Activated CD8-positive, alpha-beta T cell treated with anti-CD3 and anti-CD28 coated beads, Interleukin-2, amount 10 ng/mL, durations not matched to agents 7 days and 5 days (primary cell): ENCODE measurements at regions of chr1 and their contacts with region 1.

Region 1: GRCh38 chr1:39183503-39184353 is 20.8 kb upstream of the MACF1 start:
- DNase-seq: peak; percentile 89
- ATAC-seq: peak; percentile 90
- H3K4me3 Mint-ChIP-seq: peak overlapping the region; percentile 1
- H3K27ac Mint-ChIP-seq: peak overlapping the region; percentile 84
- H3K4me1 Mint-ChIP-seq: peaks cover 45% of the 10 kb centered on the region
- H3K27me3 Mint-ChIP-seq: no peaks in the 10 kb centered on the region

Region 2: DNA sequence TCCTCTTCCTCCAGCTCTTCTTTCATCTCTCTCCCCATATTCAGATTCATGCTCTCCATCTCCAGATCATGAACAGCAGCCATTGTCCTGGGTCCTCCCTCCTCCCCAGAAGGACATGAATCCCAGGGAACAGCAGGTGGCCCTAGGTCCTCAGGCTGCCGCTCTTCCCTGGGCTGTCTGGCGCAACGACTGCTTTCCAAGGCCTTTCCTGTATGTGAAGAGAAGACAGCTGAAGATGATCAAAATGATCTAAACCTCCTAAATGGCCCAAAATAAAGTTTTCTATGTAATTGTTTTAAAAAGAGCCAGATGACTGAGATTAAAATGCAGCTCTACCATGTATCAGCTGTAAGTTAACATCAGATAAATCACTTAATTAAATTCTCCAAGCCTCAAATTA is 264.6 kb before region 1 on chr1:
- CTCF ChIA-PET with region 1: no interaction called
- POLR2A ChIA-PET with region 1: no interaction called
- DNase-seq: no peak
- ATAC-seq: no peak
- H3K4me3 Mint-ChIP-seq: no peak overlapping the region
- H3K27ac Mint-ChIP-seq: peak overlapping the region; percentile 12
- H3K4me1 Mint-ChIP-seq: peaks cover 13% of the 10 kb centered on the region
- H3K27me3 Mint-ChIP-seq: no peaks in the 10 kb centered on the region

Region 3: GRCh38 chr1:39047374-39048229 is 136.1 kb before region 1 on chr1:
- CTCF ChIA-PET with region 1: no interaction called
- POLR2A ChIA-PET with region 1: no interaction called
- DNase-seq: no peak
- ATAC-seq: no peak
- H3K4me3 Mint-ChIP-seq: no peak overlapping the region
- H3K27ac Mint-ChIP-seq: no peak overlapping the region
- H3K4me1 Mint-ChIP-seq: peaks cover 5% of the 10 kb centered on the region
- H3K27me3 Mint-ChIP-seq: no peaks in the 10 kb centered on the region

Region 4: GRCh38 chr1:39105061-39105840 is 78.5 kb before region 1 on chr1:
- CTCF ChIA-PET with region 1: interaction called, 283 read pairs
- POLR2A ChIA-PET with region 1: interaction called, 3 read pairs
- DNase-seq: peak; percentile 59
- ATAC-seq: peak; percentile 86
- H3K4me3 Mint-ChIP-seq: peak overlapping the region; percentile 78
- H3K27ac Mint-ChIP-seq: no peak overlapping the region
- H3K4me1 Mint-ChIP-seq: peaks cover 24% of the 10 kb centered on the region
- H3K27me3 Mint-ChIP-seq: peaks cover 7% of the 10 kb centered on the region

Region 5: GRCh38 chr1:39204441-39205081 is 20.8 kb after region 1 on chr1 and contains the start of gene MACF1:
- CTCF ChIA-PET with region 1: interaction called, 540 read pairs
- POLR2A ChIA-PET with region 1: interaction called, 12 read pairs
- DNase-seq: peak; percentile 58
- ATAC-seq: peak; percentile 61
- H3K4me3 Mint-ChIP-seq: peak within 1 kb of the TSS; percentile 93
- H3K27ac Mint-ChIP-seq: peak within 1 kb of the TSS; percentile 93
- H3K4me1 Mint-ChIP-seq: peaks cover 53% of the 10 kb centered on the region
- H3K27me3 Mint-ChIP-seq: no peaks in the 10 kb centered on the region
- total RNA-seq, gene MACF1: 353 to 366 TPM

Region 6: DNA sequence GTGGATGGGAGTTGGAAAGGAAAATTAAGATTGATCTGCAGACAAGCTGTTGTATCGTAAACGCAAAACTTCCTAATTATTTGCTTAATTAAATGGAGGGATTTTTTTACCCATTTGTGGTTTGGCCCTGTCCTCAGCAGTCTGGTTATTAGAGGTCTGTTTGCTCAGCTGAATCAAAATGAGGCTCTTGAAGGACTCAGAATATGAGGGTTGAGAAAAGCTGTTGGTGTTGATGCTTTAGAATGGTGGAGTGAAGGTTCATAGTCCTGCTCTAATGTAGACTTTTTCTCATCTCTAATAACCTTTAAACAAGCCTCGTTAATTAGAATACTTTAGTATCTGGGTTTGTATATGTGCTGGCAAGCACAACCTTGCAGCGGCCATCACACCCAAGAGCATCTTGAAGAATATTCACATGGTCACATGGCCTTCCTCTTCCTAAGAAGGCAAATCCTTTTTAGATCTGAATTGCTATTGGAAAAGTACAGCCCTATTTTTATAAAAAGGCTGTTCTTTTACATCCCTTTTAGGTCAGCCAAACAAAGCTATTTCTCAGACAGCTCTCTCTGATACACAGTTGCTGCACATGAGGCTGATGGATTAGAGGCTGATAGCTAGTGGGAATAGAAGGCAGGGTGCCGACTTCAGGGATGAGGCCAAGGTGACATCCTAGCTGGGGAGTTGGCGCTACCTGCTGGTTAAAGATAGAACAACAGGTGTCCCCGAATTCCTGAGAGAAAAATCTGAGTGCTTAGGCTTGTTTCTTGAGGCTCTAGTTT is 74.6 kb after region 1 on chr1:
- CTCF ChIA-PET with region 1: interaction called, 517 read pairs
- POLR2A ChIA-PET with region 1: interaction called, 3 read pairs
- DNase-seq: peak; percentile 69
- ATAC-seq: peak; percentile 57
- H3K4me3 Mint-ChIP-seq: no peak overlapping the region
- H3K27ac Mint-ChIP-seq: no peak overlapping the region
- H3K4me1 Mint-ChIP-seq: peaks cover 27% of the 10 kb centered on the region
- H3K27me3 Mint-ChIP-seq: no peaks in the 10 kb centered on the region

Region 7: DNA sequence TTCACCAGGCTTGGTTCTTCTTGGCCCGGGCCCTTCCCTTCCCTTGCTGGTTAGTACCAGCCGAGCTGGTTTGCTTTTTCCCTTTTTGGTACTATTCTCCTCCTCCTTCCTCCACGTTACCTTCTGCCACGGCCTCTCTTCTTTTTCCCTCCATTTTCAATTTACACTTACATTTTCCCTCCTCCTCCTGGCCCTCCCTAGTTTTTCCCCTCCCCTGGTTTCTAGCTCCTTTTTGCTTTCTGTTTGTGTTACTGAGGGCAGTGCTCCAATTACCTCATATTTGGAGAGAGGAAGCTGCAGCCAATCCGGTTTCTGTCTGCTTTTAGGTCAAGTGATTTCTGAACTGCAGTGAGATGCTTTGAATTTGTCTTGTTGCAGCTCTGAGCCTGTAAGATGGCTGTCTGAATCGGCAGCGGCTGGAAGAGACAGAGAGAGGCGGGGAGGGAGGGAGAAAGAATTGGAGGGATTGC is 84.4 kb after region 1 on chr1:
- CTCF ChIA-PET with region 1: interaction called, 517 read pairs
- POLR2A ChIA-PET with region 1: no interaction called
- DNase-seq: no peak
- ATAC-seq: no peak
- H3K4me3 Mint-ChIP-seq: peak overlapping the region; percentile 53
- H3K27ac Mint-ChIP-seq: peak overlapping the region; percentile 68
- H3K4me1 Mint-ChIP-seq: peaks cover 44% of the 10 kb centered on the region
- H3K27me3 Mint-ChIP-seq: no peaks in the 10 kb centered on the region

Region 8: DNA sequence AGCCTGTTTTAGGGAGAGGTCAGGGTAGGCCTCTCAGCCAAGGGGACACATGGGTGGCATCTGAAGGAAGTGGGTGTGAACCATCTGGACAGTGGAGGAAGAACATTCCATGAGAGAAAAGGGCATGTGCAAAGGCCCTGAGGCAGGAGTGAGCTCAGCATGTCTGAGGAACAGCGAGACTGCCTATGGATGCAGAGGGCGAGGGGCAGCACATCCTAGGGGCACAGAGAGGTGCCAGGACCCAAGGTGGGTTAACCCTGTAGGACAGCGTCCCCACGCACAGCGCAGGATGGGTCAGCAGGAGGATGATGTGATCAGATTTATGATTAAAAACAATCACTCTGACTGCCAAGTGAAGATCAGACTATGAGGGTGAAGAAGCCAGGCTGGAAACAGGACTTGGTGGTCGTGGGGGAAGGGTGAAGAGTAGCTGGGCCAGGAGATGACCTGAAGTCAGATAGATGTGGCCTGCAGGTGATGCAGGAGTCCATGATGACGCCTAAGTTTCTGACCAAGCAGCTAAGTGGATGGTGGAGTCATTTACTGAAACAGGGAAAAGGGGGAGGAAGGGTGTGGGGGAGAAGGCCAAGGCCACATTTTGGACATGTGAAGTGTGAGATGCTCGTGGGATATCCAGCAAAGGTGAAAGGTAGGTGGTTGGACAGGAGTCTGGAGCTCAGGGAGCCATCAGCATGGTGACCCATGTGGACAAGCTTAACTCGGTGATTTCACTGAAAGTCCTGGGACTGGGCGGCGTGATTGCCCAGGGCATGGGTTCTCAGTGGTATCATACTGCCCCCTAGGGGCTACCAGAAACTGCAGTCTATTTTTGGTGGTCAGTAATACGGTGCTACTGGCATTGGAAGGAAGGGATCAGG is 355.1 kb after region 1 on chr1:
- CTCF ChIA-PET with region 1: interaction called, 16 read pairs
- POLR2A ChIA-PET with region 1: no interaction called
- DNase-seq: peak; percentile 66
- ATAC-seq: peak; percentile 91
- H3K4me3 Mint-ChIP-seq: no peak overlapping the region
- H3K27ac Mint-ChIP-seq: no peak overlapping the region
- H3K4me1 Mint-ChIP-seq: no peaks in the 10 kb centered on the region
- H3K27me3 Mint-ChIP-seq: no peaks in the 10 kb centered on the region